ENCODE measurements at regions of chr4 and their contacts with region 1.

Region 1: DNA sequence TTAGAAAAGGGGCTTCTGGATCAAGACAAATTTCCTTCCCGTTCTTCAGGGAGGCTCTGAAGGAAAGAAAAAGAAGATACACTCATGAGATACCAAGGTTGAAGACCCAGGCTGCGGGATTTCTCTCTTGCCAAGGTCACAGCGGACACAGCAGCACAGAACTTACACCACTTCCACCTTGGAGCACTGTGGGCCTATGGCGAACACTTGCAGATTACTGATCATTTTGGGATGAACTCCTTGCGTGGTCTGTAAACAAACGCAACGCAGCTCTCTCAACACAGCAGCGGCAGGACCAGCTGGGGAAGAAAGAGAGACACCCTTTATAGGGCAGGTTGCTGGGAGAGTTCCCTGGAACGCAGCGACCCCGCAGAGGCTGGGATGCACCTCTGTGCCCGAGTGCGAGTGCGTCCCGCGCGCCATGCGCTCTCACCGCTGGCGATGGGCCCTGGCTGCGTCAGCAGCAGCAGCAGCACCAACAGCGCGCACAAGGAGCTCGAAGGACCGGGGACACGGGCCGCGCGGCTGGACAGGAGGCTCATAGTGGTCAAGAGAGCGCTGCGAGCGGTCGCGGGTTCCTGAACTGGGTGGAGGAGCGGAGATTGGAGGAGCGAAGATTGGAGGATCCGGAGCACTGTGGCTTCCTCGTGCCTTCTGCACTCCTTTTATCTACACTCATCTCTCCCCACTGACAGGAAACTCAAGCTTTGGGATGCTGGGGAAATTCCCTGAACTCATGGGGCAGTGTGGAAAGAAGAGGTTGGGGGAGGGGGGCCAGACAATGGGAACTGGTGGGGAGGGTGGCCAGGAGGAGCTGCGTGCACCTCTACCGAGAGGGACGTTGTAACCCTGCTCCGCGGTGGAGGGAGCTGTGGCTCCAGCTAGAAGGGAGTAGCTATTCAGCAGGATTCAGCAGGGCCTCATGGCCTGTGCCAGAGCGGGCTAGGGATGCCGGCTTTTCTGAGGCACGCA is at the start of gene CXCL5:
- DNase-seq: peak; percentile 91
- H3K4me3 Mint-ChIP-seq: peak within 1 kb of the TSS; percentile 91
- H3K27ac Mint-ChIP-seq: peak within 1 kb of the TSS; percentile 96
- H3K4me1 Mint-ChIP-seq: peaks cover 31% of the 10 kb centered on the region
- H3K27me3 Mint-ChIP-seq: no peaks in the 10 kb centered on the region
- CTCF ChIP-seq: no peak
- total RNA-seq, gene CXCL5: 1,110 and 1,906 TPM in 2 replicates

Region 2: DNA sequence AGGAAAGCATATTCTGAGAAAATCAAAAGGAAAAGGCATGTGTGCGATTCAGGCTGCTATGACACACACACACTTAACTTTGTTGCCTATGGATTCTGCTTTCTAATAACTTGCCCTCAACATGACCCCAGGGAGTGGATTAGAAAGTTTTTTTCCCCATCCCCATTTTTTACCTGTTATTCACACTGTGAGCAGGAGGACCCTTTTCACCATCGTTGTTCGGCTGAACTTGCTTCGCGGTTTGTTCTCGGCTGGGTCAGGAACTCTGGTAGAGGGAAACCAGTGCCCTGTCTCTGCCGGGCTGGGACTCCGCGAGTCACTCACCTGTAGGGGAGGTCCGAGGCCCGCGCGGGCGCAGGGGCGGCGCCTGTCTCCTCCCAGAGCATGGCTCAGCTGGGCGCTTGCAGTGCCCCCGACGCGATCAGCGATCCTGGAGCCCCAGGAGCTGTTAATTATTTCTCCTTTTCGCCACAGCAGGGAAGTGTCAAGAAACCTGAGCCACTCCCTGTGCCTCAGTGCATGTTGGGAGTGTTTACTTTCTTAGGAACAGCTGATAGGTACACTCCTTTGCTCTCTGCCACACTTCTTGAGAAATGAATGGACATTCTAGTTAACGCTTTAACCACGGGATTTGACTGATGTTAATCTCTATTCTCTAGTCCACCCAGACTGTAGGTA is 378.1 kb before region 1 on chr4 and contains the start of gene RASSF6:
- CTCF ChIA-PET with region 1: no interaction called
- intact Hi-C with region 1: no loop called
- DNase-seq: peak; percentile 91
- H3K4me3 Mint-ChIP-seq: peak within 1 kb of the TSS; percentile 91
- H3K27ac Mint-ChIP-seq: peak within 1 kb of the TSS; percentile 90
- H3K4me1 Mint-ChIP-seq: peaks cover 25% of the 10 kb centered on the region
- H3K27me3 Mint-ChIP-seq: no peaks in the 10 kb centered on the region
- CTCF ChIP-seq: no peak
- total RNA-seq, gene RASSF6: 12.5 and 12.8 TPM in 2 replicates

Region 3: DNA sequence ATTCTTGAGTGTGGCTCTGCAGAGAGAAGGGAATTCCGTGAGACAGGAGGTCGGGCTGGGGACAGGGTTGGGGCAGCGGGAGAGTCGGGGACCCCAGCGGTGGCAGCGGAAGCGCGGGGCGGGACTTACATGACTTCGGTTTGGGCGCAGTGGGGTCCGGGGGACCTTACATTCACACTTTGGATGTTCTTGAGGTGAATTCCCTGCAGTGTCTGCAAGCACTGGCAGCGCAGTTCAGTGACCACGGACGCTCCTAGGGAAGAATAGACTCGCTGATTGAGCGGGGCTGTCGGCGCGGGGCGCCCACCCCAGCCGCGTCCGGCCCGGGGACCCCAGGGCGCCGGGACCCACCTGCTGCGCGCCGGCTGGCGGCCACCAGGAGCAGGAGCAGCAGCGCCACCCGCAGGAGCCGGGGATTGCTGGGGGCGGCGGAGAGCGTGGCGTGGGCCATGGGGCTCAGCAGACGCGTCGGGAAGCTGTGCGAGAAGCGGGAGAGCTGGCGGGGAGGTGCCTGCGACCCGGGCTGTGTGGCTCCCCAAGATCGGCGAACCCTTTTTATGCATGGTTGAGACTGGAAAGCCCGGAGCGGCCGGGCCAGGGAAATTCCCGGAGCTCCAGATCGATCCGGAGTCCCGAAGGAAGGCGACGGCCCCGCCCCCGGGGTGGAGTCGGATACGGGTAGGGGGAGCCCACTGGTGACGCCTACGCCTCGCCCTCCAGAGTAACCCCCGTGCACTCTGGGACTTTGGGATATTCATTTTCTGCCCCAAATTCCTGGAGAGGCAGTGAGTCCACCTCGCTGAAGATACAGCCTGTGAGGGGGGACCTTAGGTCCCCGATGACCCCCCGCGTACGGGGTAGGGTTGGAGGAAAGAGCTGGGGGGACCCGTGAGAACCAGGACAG is 40.1 kb after region 1 on chr4 and contains the start of gene CXCL3:
- CTCF ChIA-PET with region 1: interaction called, 32 read pairs
- intact Hi-C with region 1: loop called (anchors 2 kb)
- DNase-seq: peak; percentile 94
- H3K4me3 Mint-ChIP-seq: peak within 1 kb of the TSS; percentile 84
- H3K27ac Mint-ChIP-seq: peak within 1 kb of the TSS; percentile 91
- H3K4me1 Mint-ChIP-seq: peaks cover 42% of the 10 kb centered on the region
- H3K27me3 Mint-ChIP-seq: no peaks in the 10 kb centered on the region
- CTCF ChIP-seq: no peak
- total RNA-seq, gene CXCL3: 80.8 and 153 TPM in 2 replicates

Region 4: DNA sequence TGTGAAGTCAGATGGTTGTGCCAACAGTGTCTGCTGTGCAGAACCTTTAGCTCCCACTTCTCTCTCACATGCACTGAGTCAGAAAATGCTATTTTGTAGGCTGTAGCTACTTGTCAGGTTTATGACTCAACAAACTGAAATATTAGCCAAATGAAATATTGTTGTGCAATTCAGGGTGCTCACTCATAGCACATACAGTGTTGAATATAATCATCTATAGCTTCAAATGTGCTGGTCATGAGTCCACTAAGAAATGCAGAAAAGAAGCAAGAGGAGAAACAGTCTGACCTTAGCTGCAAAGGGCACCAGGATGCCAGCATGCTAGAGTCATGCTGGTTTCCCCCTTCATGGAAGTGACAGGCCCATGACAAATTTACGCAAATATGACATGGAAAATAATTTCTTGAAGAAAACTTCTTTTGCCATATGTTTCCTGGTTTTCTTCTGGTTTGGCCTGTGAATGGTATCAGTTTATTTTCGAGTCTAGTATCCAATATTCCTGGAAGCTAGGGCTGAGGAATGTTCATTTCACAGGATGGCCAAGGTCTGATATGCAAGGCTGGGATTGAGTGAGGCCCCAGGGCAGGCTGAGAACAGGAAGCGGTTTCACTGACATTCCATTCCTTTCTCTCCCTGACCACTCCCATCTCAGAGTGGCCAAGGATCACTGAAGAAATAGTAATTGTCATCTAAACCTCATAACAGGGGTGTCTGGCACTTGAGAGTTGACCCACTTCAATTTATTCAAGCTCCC is 111.0 kb after region 1 on chr4:
- CTCF ChIA-PET with region 1: interaction called, 4 read pairs
- intact Hi-C with region 1: loop called (anchors 5 kb)
- DNase-seq: peak; percentile 71
- H3K4me3 Mint-ChIP-seq: peak overlapping the region; percentile 52
- H3K27ac Mint-ChIP-seq: peak overlapping the region; percentile 99
- H3K4me1 Mint-ChIP-seq: peaks cover 42% of the 10 kb centered on the region
- H3K27me3 Mint-ChIP-seq: no peaks in the 10 kb centered on the region
- CTCF ChIP-seq: no peak